ENCODE measurements at regions of chr9 and their contacts with region 1.

Region 1: DNA sequence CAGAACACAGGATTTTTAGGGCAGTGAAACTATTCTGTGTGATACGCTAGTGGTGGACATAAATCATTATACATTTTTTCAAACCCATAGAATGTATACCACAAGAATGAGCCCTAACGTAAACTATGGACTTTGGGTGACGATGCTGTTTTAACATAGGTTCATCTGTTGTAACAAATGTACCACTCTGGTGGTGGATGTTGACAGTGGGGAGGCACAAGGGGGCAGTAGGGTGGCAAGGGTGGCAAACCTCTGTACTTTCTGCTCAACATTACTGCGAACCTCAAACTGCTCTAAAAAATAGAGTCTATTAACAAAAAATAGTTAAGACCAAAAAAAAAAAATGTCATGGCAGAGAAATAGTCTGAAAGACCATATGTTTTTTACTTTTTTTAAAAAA is 9.1 kb upstream of the MVB12B start:
- DNase-seq: no peak
- H3K4me3 ChIP-seq: no peak overlapping the region
- H3K27ac ChIP-seq: no peak overlapping the region
- H3K4me1 ChIP-seq: peaks cover 0 to 4% (median 2%) of the 10 kb centered on the region in 4 experiments; a peak in 2 of 7 replicates
- H3K27me3 ChIP-seq: no peaks in the 10 kb centered on the region
- CTCF ChIP-seq: peak; percentile 46 to 56 (median 47)
- EP300 ChIP-seq: no peak
- POLR2A ChIP-seq: no peak
- RAD21 ChIP-seq: peak; percentile 48 to 57; a peak in 3 of 4 replicates

Region 2: DNA sequence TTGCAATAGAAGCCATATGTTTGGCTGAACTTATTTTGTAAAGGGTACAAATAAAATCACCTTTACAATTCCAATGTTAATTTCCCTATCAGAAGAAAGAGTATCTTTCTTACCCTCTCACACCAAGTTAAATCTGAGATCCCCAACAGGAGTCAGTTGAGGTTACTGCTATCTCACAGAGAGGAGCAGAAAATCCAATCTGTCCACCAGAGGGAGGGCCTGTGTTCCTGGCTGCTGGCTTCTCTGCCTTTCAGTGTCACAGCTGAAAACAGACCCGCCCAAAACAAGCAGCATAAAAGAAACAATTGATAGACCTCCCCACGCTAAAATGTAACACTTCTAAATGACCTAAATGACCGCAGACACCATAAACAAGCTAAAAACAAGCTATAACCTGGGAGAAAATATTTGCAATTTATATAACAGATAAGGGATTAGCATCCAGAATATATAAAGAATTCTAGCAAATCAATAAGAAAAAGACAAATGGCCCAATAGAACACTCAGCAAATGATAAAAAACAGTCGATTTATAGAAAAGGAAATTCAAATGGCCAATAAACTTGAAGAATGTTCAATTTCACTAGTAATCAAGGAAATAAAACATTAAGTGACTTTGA is 15.4 kb before region 1 on chr9:
- CTCF ChIA-PET with region 1: interaction called, 11 read pairs
- POLR2A ChIA-PET with region 1: no interaction called
- DNase-seq: peak; percentile 31 to 57
- H3K4me3 ChIP-seq: no peak overlapping the region
- H3K27ac ChIP-seq: no peak overlapping the region
- H3K4me1 ChIP-seq: no peaks in the 10 kb centered on the region; a peak in 1 of 7 replicates
- H3K27me3 ChIP-seq: no peaks in the 10 kb centered on the region
- CTCF ChIP-seq: peak; percentile 62 to 88 (median 84)
- EP300 ChIP-seq: no peak
- POLR2A ChIP-seq: no peak
- RAD21 ChIP-seq: peak; percentile 74 to 83

Region 3: GRCh38 chr9:126564711-126565110 is 247.2 kb after region 1 on chr9:
- CTCF ChIA-PET with region 1: no interaction called
- POLR2A ChIA-PET with region 1: no interaction called
- DNase-seq: no peak
- H3K4me3 ChIP-seq: no peak overlapping the region
- H3K27ac ChIP-seq: no peak overlapping the region
- H3K4me1 ChIP-seq: no peaks in the 10 kb centered on the region; a peak in 1 of 7 replicates
- H3K27me3 ChIP-seq: peaks cover 0 to 3% (median 0%) of the 10 kb centered on the region in 4 experiments; a peak in 2 of 7 replicates
- CTCF ChIP-seq: peak; percentile 69 to 73 (median 71)
- EP300 ChIP-seq: no peak
- POLR2A ChIP-seq: no peak
- RAD21 ChIP-seq: peak; percentile 41 to 64